H1 (cell line): ENCODE measurements at regions of chr16 and their contacts with region 1.

Region 1: GRCh38 chr16:74774203-74775116 is at the start of gene FA2H:
- DNase-seq: peak; percentile 58 to 90
- H3K4me3 ChIP-seq: peak within 1 kb of the TSS; percentile 47 to 64 (median 54)
- H3K27ac ChIP-seq: no peak within 1 kb of the TSS
- H3K4me1 ChIP-seq: peaks cover 0 to 6% (median 2%) of the 10 kb centered on the region in 4 experiments; a peak in 1 of 7 replicates
- H3K27me3 ChIP-seq: peaks cover 0 to 21% (median 16%) of the 10 kb centered on the region in 4 experiments; a peak in 6 of 7 replicates
- CTCF ChIP-seq: peak; percentile 22 to 48 (median 40)
- EP300 ChIP-seq: 0 out of 3 replicates have a peak, but pooled peaks of 1 of the 2 experiments have one; percentile 37
- POLR2A ChIP-seq: no peak
- RAD21 ChIP-seq: peak in 1 of 2 experiments; percentile 30; a peak in 1 of 4 replicates
- total RNA-seq, gene FA2H: 1.6 and 2.1 TPM in 2 replicates

Region 2: DNA sequence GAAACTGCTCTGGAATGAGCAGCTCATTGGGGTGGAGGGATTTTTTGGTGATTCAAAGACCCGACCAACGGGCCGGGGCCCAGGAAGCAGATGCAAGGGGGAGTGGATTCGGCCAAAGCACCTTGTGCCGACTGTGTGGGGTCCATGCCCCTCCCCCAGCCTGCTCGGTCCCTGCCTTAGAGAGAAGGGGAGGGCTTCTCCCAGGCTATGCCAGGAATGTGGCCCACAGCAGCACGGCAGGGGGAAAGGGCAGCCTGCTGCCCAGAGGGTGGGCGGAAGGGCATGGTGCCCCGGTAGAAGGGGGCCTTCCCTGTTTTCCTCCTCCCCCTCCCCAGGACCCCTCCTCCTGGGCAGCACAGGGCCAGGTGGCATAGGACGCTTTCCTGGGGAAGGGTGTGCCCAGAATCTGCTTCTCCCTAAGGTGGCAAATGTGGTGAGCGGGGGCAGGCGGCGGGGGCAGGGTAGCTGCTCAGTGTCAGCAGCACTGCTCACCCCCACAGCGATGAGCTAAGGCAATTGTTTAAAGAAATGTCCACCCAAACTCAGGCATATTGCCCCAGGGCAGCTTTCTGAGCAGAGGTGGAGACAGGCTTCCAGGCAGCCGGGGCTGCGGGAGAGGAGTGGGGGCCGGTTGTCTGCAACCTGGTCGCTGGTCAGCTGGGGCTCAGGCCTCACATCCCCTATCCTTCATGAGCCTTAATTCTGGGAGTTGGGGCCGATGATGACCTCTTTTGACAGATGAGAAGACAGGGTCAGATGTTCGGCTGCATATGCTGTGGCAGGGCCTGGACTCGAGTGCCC is 39.9 kb before region 1 on chr16:
- CTCF ChIA-PET with region 1: interaction called, 12 read pairs
- POLR2A ChIA-PET with region 1: interaction called, 4 read pairs
- DNase-seq: peak; percentile 59 to 74
- H3K4me3 ChIP-seq: peak overlapping the region in 3 of 4 experiments; percentile 8 to 29 (median 11); a peak in 3 of 8 replicates
- H3K27ac ChIP-seq: no peak overlapping the region
- H3K4me1 ChIP-seq: peaks cover 2 to 37% (median 28%) of the 10 kb centered on the region in 4 experiments
- H3K27me3 ChIP-seq: 0 out of 7 replicates have a peak, but pooled peaks cover 0 to 2% (median 0%) of the 10 kb centered on the region in 4 experiments
- CTCF ChIP-seq: no peak
- EP300 ChIP-seq: no peak
- POLR2A ChIP-seq: no peak
- RAD21 ChIP-seq: no peak

Region 3: GRCh38 chr16:74785031-74785430 is 10.6 kb after region 1 on chr16:
- CTCF ChIA-PET with region 1: interaction called, 14 read pairs
- POLR2A ChIA-PET with region 1: interaction called, 3 read pairs
- DNase-seq: peak in 1 of 2 experiments; percentile 19
- H3K4me3 ChIP-seq: no peak overlapping the region
- H3K27ac ChIP-seq: no peak overlapping the region
- H3K4me1 ChIP-seq: no peaks in the 10 kb centered on the region
- H3K27me3 ChIP-seq: no peaks in the 10 kb centered on the region; a peak in 1 of 7 replicates
- CTCF ChIP-seq: peak in 2 of 3 experiments; percentile 6 to 12; a peak in 1 of 4 replicates
- EP300 ChIP-seq: no peak
- POLR2A ChIP-seq: no peak
- RAD21 ChIP-seq: peak; percentile 34 to 38; a peak in 2 of 4 replicates